Activated CD4-positive, alpha-beta T cell treated with anti-CD3 and anti-CD28 coated beads for 36 hours (primary cell): ENCODE measurements at regions of chr11 and their contacts with region 1.

Region 1: GRCh38 chr11:9460322-9461067 is at the start of gene ZNF143:
- DNase-seq: peak; percentile 100
- ATAC-seq: peak; percentile 93
- H3K4me3 Mint-ChIP-seq: peak within 1 kb of the TSS; percentile 93
- H3K27ac Mint-ChIP-seq: peak within 1 kb of the TSS; percentile 99
- H3K4me1 Mint-ChIP-seq: peaks cover 24% of the 10 kb centered on the region
- H3K27me3 Mint-ChIP-seq: no peaks in the 10 kb centered on the region
- total RNA-seq, gene ZNF143: 32.6 to 34.9 TPM

Region 2: DNA sequence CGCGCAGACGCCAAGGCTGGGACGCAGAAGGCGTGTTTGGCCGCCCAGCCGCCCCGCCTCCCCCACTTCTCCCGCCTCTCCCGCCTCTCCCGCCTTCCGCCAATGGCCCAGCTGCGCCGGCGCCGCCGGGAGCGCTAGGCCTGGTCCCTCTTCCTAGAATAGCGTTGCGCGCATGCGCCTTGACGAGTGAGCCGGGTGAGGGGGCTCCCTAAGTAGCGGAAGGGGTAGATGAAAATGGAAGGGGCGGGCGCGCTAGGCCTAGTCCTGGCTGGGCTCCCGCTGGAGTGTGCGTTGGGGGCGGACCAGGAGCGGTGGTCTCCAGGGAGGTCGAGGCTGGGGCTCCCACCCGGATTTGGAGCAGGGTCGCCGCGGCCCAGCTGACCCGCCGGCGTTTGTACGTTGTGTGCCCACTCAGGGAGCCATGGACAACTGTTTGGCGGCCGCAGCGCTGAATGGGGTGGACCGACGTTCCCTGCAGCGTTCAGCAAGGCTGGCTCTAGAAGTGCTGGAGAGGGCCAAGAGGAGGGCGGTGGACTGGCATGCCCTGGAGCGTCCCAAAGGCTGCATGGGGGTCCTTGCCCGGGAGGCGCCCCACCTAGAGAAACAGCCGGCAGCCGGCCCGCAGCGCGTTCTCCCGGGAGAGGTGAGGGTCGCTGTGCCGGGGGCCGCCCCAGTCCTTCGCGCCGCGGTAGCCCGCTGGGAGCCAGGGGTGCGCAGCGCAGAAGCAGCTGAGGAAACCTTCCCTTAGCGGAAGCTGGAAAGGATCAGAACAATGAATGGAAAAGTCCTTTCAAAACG is 549.3 kb before region 1 on chr11 and contains the start of gene AKIP1:
- CTCF ChIA-PET with region 1: no interaction called
- POLR2A ChIA-PET with region 1: no interaction called
- intact Hi-C with region 1: loop called (anchors 1 to 5 kb)
- DNase-seq: peak; percentile 94
- ATAC-seq: peak; percentile 76
- H3K4me3 Mint-ChIP-seq: peak within 1 kb of the TSS; percentile 86
- H3K27ac Mint-ChIP-seq: peak within 1 kb of the TSS; percentile 89
- H3K4me1 Mint-ChIP-seq: peaks cover 45% of the 10 kb centered on the region
- H3K27me3 Mint-ChIP-seq: peaks cover 6% of the 10 kb centered on the region
- total RNA-seq, gene AKIP1: 29.8 to 32.2 TPM

Region 3: GRCh38 chr11:9060700-9061111 is 399.8 kb before region 1 on chr11:
- CTCF ChIA-PET with region 1: no interaction called
- POLR2A ChIA-PET with region 1: no interaction called
- intact Hi-C with region 1: loop called in 1 of 2 experiments (anchors 2 kb)
- DNase-seq: peak; percentile 88
- ATAC-seq: peak; percentile 100
- H3K4me3 Mint-ChIP-seq: no peak overlapping the region
- H3K27ac Mint-ChIP-seq: peak overlapping the region; percentile 29
- H3K4me1 Mint-ChIP-seq: peaks cover 13% of the 10 kb centered on the region
- H3K27me3 Mint-ChIP-seq: peaks cover 25% of the 10 kb centered on the region

Region 4: DNA sequence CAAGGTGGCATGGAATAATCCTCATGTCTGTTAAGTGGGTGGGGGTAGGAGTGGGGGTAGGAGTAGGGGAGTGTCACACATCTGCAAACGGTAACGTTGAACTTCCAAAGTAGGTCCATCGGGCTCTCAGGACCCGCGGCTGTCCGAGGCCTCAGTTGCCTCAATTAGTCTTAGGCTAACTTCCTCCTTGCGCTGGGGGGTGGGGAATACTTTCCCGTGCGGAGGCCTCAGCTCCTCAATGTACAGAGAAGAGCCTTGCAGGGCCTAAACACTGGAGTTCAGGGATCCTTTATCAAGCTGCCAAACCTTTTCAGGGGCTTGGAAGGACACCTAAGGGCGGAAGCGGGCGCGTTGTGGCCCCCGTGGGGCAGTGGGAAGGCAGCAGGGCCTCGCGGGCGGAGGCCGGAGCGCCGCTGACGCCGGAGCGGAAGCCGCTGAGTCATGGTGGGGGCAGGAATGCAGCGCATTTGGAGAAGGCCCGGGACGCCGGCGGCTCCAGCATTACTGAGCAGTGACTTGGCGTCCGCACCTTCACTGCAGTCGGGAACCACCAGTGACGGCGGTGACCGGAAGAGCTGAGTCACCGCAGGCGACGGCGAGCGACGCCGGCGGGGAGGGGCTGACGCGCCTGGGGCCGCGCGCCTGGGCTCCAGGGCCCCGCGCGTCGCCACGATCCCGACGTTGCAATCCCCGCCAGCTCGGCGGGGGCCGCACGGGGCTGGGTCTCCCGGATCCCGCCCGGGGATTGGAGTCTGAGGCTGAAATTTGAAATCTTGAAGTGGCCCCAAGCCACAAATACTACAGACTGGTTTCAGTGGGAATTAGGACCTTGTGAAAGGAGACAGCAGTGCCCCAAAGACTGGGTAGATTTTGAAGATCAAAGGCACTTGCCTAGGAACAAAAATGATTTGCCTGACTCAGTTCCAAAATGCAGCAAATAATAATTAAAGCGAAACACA is 96.3 kb before region 1 on chr11:
- CTCF ChIA-PET with region 1: no interaction called
- POLR2A ChIA-PET with region 1: no interaction called
- intact Hi-C with region 1: loop called (anchors 1 to 5 kb)
- DNase-seq: peak; percentile 92
- ATAC-seq: peak; percentile 88
- H3K4me3 Mint-ChIP-seq: peak overlapping the region; percentile 62
- H3K27ac Mint-ChIP-seq: peak overlapping the region; percentile 88
- H3K4me1 Mint-ChIP-seq: peaks cover 30% of the 10 kb centered on the region
- H3K27me3 Mint-ChIP-seq: no peaks in the 10 kb centered on the region

Region 5: GRCh38 chr11:9573052-9573774 is 112.7 kb after region 1 on chr11 and contains the start of gene WEE1:
- CTCF ChIA-PET with region 1: no interaction called
- POLR2A ChIA-PET with region 1: interaction called, 16 read pairs
- intact Hi-C with region 1: loop called (anchors 1 to 2 kb)
- DNase-seq: peak; percentile 99
- ATAC-seq: peak; percentile 94
- H3K4me3 Mint-ChIP-seq: peak within 1 kb of the TSS; percentile 94
- H3K27ac Mint-ChIP-seq: peak within 1 kb of the TSS; percentile 82
- H3K4me1 Mint-ChIP-seq: peaks cover 33% of the 10 kb centered on the region
- H3K27me3 Mint-ChIP-seq: peaks cover 3% of the 10 kb centered on the region
- total RNA-seq, gene WEE1: 44.8 to 46.5 TPM

Region 6: DNA sequence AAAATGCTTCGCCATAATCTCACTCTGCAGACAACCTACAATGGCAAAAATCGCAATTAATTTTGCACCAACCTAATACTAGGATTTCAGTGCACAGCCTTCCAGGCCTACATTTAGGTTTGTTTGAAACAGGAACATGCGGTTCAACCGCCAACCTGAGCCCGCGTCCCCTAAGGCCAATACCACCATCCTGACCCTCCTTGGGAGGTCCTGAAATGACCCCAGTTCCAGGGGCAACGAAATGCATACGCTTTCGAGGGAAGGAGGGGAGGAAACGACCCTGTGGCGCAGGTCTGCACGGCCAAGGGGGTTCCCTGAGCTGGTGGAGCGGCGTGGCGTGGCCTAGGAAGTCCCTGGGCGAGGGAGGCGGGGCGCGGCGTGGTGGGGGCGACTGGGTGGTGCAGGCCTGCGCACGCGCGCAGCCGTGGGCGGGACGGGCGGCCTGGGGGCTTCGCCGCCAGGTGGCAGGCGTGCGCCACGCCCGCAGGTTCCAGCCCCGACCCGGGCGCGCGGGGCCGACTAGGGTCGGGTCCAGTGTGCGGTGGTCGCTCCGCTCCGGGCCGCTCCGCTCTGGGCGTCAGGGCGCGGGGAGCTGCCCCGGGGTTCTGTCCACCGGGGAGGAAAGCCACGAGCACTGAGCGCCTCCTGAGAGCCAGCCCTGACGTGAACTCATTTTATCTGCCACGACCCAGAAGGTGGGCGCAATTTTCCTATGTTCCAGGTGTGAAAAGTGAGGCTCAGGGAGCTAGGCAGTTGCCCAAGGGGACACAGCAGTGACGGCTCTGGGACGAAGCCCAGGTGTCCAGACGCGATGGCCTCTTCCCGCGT is 297.5 kb after region 1 on chr11:
- CTCF ChIA-PET with region 1: no interaction called
- POLR2A ChIA-PET with region 1: interaction called, 3 read pairs
- intact Hi-C with region 1: loop called in 1 of 2 experiments (anchors 1 kb)
- DNase-seq: peak; percentile 97
- ATAC-seq: peak; percentile 47
- H3K4me3 Mint-ChIP-seq: peak overlapping the region; percentile 86
- H3K27ac Mint-ChIP-seq: peak overlapping the region; percentile 89
- H3K4me1 Mint-ChIP-seq: peaks cover 51% of the 10 kb centered on the region
- H3K27me3 Mint-ChIP-seq: no peaks in the 10 kb centered on the region